Ovary (tissue), 10 donors: ENCODE measurements at regions of chr1 and their contacts with region 1.

Region 1: DNA sequence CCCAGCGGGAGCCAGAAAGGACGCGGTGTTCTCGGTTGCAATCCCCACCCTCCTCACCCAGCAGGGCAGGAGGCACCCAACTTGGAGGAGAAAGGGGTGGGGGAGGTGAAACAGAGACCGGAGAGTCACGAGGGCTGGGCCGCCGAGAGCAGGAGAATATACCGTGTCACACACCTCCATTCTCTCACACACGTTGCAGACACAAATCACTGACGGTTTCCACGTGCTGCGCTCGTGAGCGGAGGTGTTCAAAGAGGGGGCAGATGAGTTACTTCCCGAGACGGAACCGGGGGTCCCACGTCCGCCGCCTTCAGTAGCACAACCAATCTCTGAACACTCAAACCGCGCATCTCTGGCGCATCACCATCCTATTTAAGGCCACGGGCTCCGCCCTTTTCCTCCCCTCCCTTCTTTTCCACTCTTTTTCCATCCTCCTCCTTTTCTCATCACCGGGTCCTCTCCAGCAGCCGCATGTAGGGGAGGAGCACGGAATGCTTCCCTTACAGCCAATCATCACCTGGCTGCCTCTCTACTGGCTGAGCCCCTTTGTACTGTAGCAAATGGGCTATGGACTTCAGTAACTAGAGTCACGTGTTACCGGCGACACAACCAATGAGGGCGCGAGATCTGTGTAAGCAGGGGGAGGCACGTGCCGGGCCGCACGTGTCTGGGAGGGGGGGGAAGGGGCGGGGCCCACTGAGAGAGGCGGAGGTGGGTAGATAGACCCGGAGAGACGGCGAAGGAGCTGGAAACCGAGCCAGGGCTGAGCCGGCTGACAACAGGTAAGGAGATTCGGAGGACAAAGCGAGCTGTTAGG is at the start of gene CIART:
- DNase-seq: peak; percentile 90 to 96 (median 93)
- H3K4me3 ChIP-seq: peak within 1 kb of the TSS; percentile 44
- H3K27ac ChIP-seq: peak within 1 kb of the TSS; percentile 79 to 87
- H3K4me1 ChIP-seq: peaks cover 8% of the 10 kb centered on the region
- H3K27me3 ChIP-seq: no peaks in the 10 kb centered on the region
- CTCF ChIP-seq: peak in 1 of 3 donors; percentile 7
- EP300 ChIP-seq: peak; percentile 60
- POLR2A ChIP-seq: peak; percentile 51
- total RNA-seq, gene CIART: 3.6 to 22.5 (median 7.7) TPM

Region 2: DNA sequence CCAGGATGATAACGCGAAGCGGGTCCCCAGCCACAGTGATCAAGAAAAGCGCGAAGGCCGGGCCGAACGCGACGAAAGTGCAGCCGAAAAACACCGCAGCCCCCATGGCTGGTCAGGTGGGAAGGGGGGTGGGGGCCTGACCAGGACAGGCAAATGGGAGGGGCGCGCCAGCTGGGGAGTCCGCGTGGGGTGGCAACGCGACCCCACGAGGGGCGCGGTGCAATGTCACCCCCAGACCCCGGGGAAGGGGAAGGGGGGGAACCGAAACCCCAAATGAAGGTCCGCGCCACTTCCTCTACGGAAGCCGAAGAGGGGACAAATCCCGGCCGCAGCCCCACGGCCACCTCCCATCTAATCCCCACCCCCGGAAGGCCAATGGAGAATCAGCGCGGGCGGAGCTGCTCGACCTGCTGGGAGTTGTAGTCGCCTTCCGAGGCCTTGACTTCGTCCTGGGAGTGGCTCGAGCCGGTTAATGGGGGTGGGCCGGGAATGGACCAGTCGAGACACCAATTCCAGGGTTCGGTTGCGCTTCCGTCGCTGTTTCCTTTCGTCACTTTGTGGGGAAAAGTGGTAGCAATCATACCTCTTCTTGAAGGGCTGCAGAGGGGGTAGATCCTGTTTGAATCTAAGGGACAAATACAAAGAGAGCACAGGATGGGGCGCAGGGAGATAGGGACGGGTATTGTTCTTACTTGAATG is 13.2 kb before region 1 on chr1 and contains the start of gene APH1A:
- intact Hi-C with region 1: loop called in 1 of 4 experiments (anchors 2 kb)
- DNase-seq: peak; percentile 94 to 95 (median 94)
- H3K4me3 ChIP-seq: peak within 1 kb of the TSS; percentile 91
- H3K27ac ChIP-seq: peak within 1 kb of the TSS; percentile 58 to 74
- H3K4me1 ChIP-seq: peaks cover 8% of the 10 kb centered on the region
- H3K27me3 ChIP-seq: no peaks in the 10 kb centered on the region
- CTCF ChIP-seq: no peak
- EP300 ChIP-seq: no peak
- POLR2A ChIP-seq: no peak
- total RNA-seq, gene APH1A: 80.0 to 129 (median 116) TPM